CD8-positive, alpha-beta memory T cell (primary cell): ENCODE measurements at regions of chr15 and their contacts with region 1.

Region 1: GRCh38 chr15:64681424-64682024 is 93.9 kb downstream of the RBPMS2 start:
- DNase-seq: no peak
- H3K4me3 ChIP-seq: no peak overlapping the region
- H3K4me3 Mint-ChIP-seq: no peak overlapping the region
- H3K27ac ChIP-seq: no peak overlapping the region
- H3K27ac Mint-ChIP-seq: peak overlapping the region in 4 of 8 donors; percentile 37 to 68 (median 59)
- H3K4me1 ChIP-seq: no peaks in the 10 kb centered on the region
- H3K4me1 Mint-ChIP-seq: peaks cover 0 to 3% (median 0%) of the 10 kb centered on the region in 3 donors
- H3K27me3 ChIP-seq: no peaks in the 10 kb centered on the region
- H3K27me3 Mint-ChIP-seq: no peaks in the 10 kb centered on the region

Region 2: GRCh38 chr15:64430000-64430735 is 251.4 kb before region 1 on chr15:
- CTCF ChIA-PET with region 1: interaction called, 11 read pairs
- POLR2A ChIA-PET with region 1: no interaction called
- DNase-seq: peak; percentile 1 to 82 (median 72)
- H3K4me3 ChIP-seq: peak overlapping the region; percentile 38
- H3K4me3 Mint-ChIP-seq: peak overlapping the region; percentile 17 to 86 (median 79)
- H3K27ac ChIP-seq: no peak overlapping the region
- H3K27ac Mint-ChIP-seq: peak overlapping the region; percentile 76 to 97 (median 92)
- H3K4me1 ChIP-seq: peaks cover 48% of the 10 kb centered on the region
- H3K4me1 Mint-ChIP-seq: peaks cover 37 to 47% (median 40%) of the 10 kb centered on the region in 3 donors
- H3K27me3 ChIP-seq: no peaks in the 10 kb centered on the region
- H3K27me3 Mint-ChIP-seq: no peaks in the 10 kb centered on the region